ENCODE measurements at regions of chr4 and their contacts with region 1.

Region 1: GRCh38 chr4:153432968-153433753 is 33.0 kb upstream of the TMEM131L start:
- H3K4me3 Mint-ChIP-seq: peak overlapping the region; percentile 83
- H3K27ac Mint-ChIP-seq: peak overlapping the region; percentile 91
- H3K4me1 Mint-ChIP-seq: peaks cover 16% of the 10 kb centered on the region
- H3K27me3 Mint-ChIP-seq: peaks cover 59% of the 10 kb centered on the region

Region 2: GRCh38 chr4:153450544-153450917 is 17.4 kb after region 1 on chr4:
- intact Hi-C with region 1: loop called (anchors 1 kb)
- H3K4me3 Mint-ChIP-seq: no peak overlapping the region
- H3K27ac Mint-ChIP-seq: no peak overlapping the region
- H3K4me1 Mint-ChIP-seq: peaks cover 37% of the 10 kb centered on the region
- H3K27me3 Mint-ChIP-seq: peaks cover 25% of the 10 kb centered on the region

Region 3: GRCh38 chr4:153521999-153522801 is 89.0 kb after region 1 on chr4:
- intact Hi-C with region 1: loop called (anchors 5 kb)
- H3K4me3 Mint-ChIP-seq: no peak overlapping the region
- H3K27ac Mint-ChIP-seq: peak overlapping the region; percentile 70
- H3K4me1 Mint-ChIP-seq: peaks cover 82% of the 10 kb centered on the region
- H3K27me3 Mint-ChIP-seq: no peaks in the 10 kb centered on the region

Region 4: DNA sequence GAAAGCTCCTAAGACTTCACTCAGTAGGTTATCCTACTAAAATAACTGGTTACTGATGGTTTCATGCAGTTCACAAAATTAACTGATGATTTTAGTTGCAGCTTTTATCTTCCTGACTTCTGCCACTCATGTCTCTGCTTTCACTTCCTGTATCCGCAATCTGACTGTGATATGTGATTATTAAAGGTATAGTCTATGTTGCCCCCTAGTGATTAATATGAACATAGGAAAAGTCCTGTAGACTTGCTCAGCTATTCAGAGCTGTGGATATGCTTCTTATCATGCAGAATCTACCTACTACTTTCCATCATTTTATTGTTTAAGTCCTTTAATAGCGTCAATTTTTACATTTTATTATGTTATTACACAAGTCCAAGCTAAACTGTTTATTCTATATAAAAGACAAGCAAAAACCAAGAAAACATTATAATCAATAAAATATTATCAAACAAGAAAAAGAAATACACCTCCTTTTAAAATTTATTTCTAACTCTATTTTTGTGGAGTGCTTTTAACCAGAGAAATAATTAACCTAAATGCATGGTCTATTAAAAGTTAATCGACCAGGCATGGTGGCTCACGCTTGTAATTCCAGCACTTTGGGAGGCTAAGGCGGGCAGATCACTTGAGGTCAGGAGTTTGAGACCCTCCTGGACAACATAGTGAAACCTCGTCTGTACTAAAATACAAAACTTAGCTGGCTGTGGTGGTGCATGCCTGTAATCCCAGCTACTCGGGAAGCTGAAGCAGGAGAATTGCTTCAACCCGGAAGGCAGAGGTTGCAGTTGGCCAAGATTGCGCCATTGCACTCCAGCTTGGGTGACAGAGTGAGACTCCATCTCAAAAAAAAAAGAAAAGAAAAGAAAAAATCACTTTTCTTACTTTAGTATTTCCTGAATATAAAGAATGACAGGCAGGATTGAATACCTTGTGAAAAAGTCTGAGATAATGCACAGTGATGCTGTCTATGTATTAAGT is 210.5 kb after region 1 on chr4:
- intact Hi-C with region 1: loop called (anchors 10 kb)
- H3K4me3 Mint-ChIP-seq: no peak overlapping the region
- H3K27ac Mint-ChIP-seq: no peak overlapping the region
- H3K4me1 Mint-ChIP-seq: peaks cover 34% of the 10 kb centered on the region
- H3K27me3 Mint-ChIP-seq: no peaks in the 10 kb centered on the region